CD4-positive, alpha-beta T cell (primary cell): ENCODE measurements at regions of chr7 and their contacts with region 1.

Region 1: GRCh38 chr7:25125137-25125946 is at the start of gene CYCS:
- DNase-seq: peak; percentile 99 to 100 (median 99)
- ATAC-seq: peak; percentile 90
- H3K4me3 ChIP-seq: peak within 1 kb of the TSS; percentile 92
- H3K4me3 Mint-ChIP-seq: peak within 1 kb of the TSS; percentile 99
- H3K27ac ChIP-seq: peak within 1 kb of the TSS; percentile 92 to 94
- H3K27ac Mint-ChIP-seq: peak within 1 kb of the TSS; percentile 99
- H3K4me1 ChIP-seq: peaks cover 14% of the 10 kb centered on the region
- H3K4me1 Mint-ChIP-seq: peaks cover 40% of the 10 kb centered on the region
- H3K27me3 ChIP-seq: no peaks in the 10 kb centered on the region
- H3K27me3 Mint-ChIP-seq: no peaks in the 10 kb centered on the region
- CTCF ChIP-seq: no peak
- total RNA-seq, gene CYCS: 126 to 131 TPM

Region 2: GRCh38 chr7:23531794-23532489 is 1593.4 kb before region 1 on chr7 and contains the start of gene TRA2A:
- CTCF ChIA-PET with region 1: no interaction called
- POLR2A ChIA-PET with region 1: interaction called, 4 read pairs
- intact Hi-C with region 1: loop called in 1 of 2 experiments (anchors 5 kb)
- DNase-seq: peak; percentile 92 to 99 (median 97)
- ATAC-seq: peak; percentile 91
- H3K4me3 ChIP-seq: peak within 1 kb of the TSS; percentile 97
- H3K4me3 Mint-ChIP-seq: peak within 1 kb of the TSS; percentile 94
- H3K27ac ChIP-seq: peak within 1 kb of the TSS; percentile 95 to 98
- H3K27ac Mint-ChIP-seq: peak within 1 kb of the TSS; percentile 97
- H3K4me1 ChIP-seq: peaks cover 29% of the 10 kb centered on the region
- H3K4me1 Mint-ChIP-seq: peaks cover 49% of the 10 kb centered on the region
- H3K27me3 ChIP-seq: no peaks in the 10 kb centered on the region
- H3K27me3 Mint-ChIP-seq: no peaks in the 10 kb centered on the region
- CTCF ChIP-seq: no peak
- total RNA-seq, gene TRA2A: 246 to 275 TPM

Region 3: DNA sequence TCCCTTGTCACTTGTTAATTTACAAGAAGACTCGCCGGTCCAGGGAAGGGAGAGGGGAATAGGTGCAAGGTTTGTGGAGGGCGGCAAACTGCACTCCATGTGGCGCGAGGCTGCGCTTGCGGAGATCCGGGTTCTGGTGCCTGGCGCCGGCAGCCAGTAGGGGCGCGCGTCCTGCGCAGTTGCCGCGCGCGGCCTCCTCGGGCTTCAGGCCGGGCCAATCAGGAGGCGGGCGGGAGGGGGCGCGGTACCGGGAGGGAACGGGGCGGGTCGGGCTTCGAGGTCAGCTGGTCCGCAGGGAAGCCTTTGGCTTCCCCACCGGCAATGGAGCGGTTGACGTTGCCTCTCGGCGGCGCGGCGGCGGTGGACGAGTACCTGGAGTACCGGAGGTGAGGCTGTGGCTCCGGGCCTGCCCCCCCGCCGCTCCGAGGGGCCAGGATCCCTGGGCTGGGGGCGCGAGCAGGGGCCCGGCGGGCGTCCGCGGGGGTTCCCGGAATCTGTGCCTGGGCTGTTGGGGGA is 1445.4 kb before region 1 on chr7 and contains the start of gene FAM221A:
- CTCF ChIA-PET with region 1: no interaction called
- POLR2A ChIA-PET with region 1: no interaction called
- intact Hi-C with region 1: loop called in 1 of 2 experiments (anchors 10 kb)
- DNase-seq: peak; percentile 60 to 91 (median 77)
- ATAC-seq: peak; percentile 95
- H3K4me3 ChIP-seq: peak within 1 kb of the TSS; percentile 81
- H3K4me3 Mint-ChIP-seq: peak within 1 kb of the TSS; percentile 95
- H3K27ac ChIP-seq: peak within 1 kb of the TSS; percentile 1 to 56
- H3K27ac Mint-ChIP-seq: peak within 1 kb of the TSS; percentile 85
- H3K4me1 ChIP-seq: peaks cover 12% of the 10 kb centered on the region
- H3K4me1 Mint-ChIP-seq: peaks cover 14% of the 10 kb centered on the region
- H3K27me3 ChIP-seq: no peaks in the 10 kb centered on the region
- H3K27me3 Mint-ChIP-seq: peaks cover 7% of the 10 kb centered on the region
- CTCF ChIP-seq: peak; percentile 82
- total RNA-seq, gene FAM221A: 1.8 to 2.8 TPM

Region 4: GRCh38 chr7:25093268-25093826 is 32.0 kb before region 1 on chr7:
- CTCF ChIA-PET with region 1: interaction called, 18 read pairs
- POLR2A ChIA-PET with region 1: interaction called, 12 read pairs
- intact Hi-C with region 1: no loop called
- DNase-seq: peak; percentile 59 to 82 (median 70)
- ATAC-seq: peak; percentile 80
- H3K4me3 ChIP-seq: no peak overlapping the region
- H3K4me3 Mint-ChIP-seq: no peak overlapping the region
- H3K27ac ChIP-seq: no peak overlapping the region
- H3K27ac Mint-ChIP-seq: no peak overlapping the region
- H3K4me1 ChIP-seq: peaks cover 9% of the 10 kb centered on the region
- H3K4me1 Mint-ChIP-seq: peaks cover 12% of the 10 kb centered on the region
- H3K27me3 ChIP-seq: no peaks in the 10 kb centered on the region
- H3K27me3 Mint-ChIP-seq: peaks cover 4% of the 10 kb centered on the region
- CTCF ChIP-seq: peak; percentile 93

Region 5: DNA sequence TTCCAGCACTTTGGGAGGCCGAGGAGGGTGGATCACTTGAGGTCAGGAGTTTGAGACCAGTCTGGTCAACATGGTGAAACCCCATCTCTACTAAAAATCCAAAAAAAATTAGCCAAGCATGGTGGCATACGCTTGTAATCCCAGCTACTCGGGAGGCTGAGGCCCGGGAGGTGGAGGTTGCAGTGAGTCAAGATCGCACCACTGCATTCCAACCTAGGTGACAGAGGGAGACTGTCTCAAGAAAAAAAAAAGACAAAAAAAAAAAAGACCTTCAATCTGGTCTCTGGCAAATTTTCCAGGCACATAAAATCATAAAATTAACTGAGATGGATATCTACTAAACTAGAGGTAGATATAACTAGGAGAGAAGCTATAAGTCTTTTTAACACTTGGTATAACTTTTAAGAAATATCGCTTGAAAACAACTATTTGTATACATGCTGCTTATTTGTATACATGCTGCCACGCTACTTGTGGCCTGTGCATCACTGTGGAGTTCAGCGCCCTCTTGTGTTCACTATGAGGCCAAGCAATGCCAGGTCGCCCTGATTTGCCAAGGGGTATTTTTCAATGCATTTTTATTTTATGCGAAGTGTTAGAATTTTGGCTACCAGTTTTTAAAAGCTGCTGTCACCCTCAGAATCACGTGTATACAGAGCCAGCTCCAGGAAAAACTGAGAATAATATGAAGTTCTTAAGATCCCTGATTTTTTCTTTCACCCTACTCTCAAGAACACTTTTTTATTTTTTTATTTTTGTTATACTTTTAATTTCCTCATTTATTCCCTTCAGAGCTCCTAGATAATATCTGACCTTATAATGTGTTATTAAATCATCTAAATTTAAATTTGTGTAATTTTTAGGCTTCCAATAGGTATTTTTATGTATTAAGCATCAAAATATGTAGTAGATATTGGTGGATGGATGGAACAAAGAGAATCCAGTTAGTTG is 27.0 kb before region 1 on chr7:
- CTCF ChIA-PET with region 1: interaction called, 18 read pairs
- POLR2A ChIA-PET with region 1: interaction called, 12 read pairs
- intact Hi-C with region 1: no loop called
- DNase-seq: peak; percentile 26 to 84 (median 42)
- ATAC-seq: peak; percentile 87
- H3K4me3 ChIP-seq: no peak overlapping the region
- H3K4me3 Mint-ChIP-seq: no peak overlapping the region
- H3K27ac ChIP-seq: no peak overlapping the region
- H3K27ac Mint-ChIP-seq: no peak overlapping the region
- H3K4me1 ChIP-seq: peaks cover 8% of the 10 kb centered on the region
- H3K4me1 Mint-ChIP-seq: peaks cover 9% of the 10 kb centered on the region
- H3K27me3 ChIP-seq: no peaks in the 10 kb centered on the region
- H3K27me3 Mint-ChIP-seq: peaks cover 1% of the 10 kb centered on the region
- CTCF ChIP-seq: peak; percentile 85

Region 6: GRCh38 chr7:25168145-25168544 is 42.8 kb after region 1 on chr7:
- CTCF ChIA-PET with region 1: no interaction called
- POLR2A ChIA-PET with region 1: no interaction called
- intact Hi-C with region 1: no loop called
- DNase-seq: no peak
- ATAC-seq: no peak
- H3K4me3 ChIP-seq: no peak overlapping the region
- H3K4me3 Mint-ChIP-seq: no peak overlapping the region
- H3K27ac ChIP-seq: no peak overlapping the region
- H3K27ac Mint-ChIP-seq: no peak overlapping the region
- H3K4me1 ChIP-seq: no peaks in the 10 kb centered on the region
- H3K4me1 Mint-ChIP-seq: no peaks in the 10 kb centered on the region
- H3K27me3 ChIP-seq: no peaks in the 10 kb centered on the region
- H3K27me3 Mint-ChIP-seq: no peaks in the 10 kb centered on the region
- CTCF ChIP-seq: no peak

Region 7: DNA sequence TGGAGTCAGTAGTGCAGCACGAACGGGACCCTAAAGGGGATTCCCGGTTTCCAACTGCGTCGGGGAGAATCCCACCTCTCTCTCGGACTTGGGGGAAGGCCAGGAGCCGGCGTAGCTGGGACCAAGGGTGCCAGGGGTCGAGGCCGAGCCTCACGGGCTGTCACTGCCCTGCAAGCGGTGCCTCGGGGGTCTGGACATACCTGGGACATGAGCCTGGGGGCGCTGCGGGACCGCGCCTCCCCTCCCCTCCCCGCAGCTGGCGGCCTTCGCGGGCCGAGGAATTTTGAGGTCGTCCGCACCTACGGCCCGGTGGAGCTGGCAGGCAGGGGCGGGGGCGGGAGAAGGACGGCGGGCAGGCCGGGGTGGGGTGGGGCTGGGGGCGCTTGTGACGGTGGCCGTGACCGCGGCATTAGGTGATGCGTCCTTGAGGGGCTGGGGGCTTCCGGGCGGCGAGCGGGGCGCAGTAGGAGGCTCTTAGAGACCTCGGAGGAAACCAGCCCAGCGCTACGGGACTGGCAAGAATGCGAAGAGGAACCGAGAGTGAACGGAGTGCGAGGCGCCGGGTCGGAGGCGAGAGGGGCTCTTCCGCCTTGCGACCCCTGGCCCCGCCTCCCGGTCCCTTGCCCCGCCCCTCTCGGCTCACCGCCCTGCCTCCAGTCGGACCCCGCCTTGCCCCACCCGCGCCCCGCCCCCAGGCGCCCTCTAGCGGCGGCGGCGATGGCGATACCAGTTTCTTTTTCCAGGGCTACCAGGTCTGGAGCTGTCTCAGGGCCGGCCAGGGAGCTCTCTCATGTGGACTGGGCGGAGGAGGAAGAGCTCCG is 54.6 kb after region 1 on chr7:
- CTCF ChIA-PET with region 1: no interaction called
- POLR2A ChIA-PET with region 1: interaction called, 27 read pairs
- intact Hi-C with region 1: loop called (anchors 1 to 2 kb)
- DNase-seq: peak; percentile 89 to 98 (median 95)
- ATAC-seq: peak; percentile 96
- H3K4me3 ChIP-seq: peak overlapping the region; percentile 77
- H3K4me3 Mint-ChIP-seq: peak overlapping the region; percentile 92
- H3K27ac ChIP-seq: peak overlapping the region; percentile 56 to 68
- H3K27ac Mint-ChIP-seq: peak overlapping the region; percentile 80
- H3K4me1 ChIP-seq: peaks cover 18% of the 10 kb centered on the region
- H3K4me1 Mint-ChIP-seq: peaks cover 24% of the 10 kb centered on the region
- H3K27me3 ChIP-seq: no peaks in the 10 kb centered on the region
- H3K27me3 Mint-ChIP-seq: no peaks in the 10 kb centered on the region
- CTCF ChIP-seq: peak; percentile 90

Region 8: GRCh38 chr7:25862260-25863037 is 737.1 kb after region 1 on chr7:
- CTCF ChIA-PET with region 1: no interaction called
- POLR2A ChIA-PET with region 1: no interaction called
- intact Hi-C with region 1: loop called in 1 of 2 experiments (anchors 10 kb)
- DNase-seq: peak; percentile 26 to 87 (median 51)
- ATAC-seq: peak; percentile 86
- H3K4me3 ChIP-seq: peak overlapping the region; percentile 13
- H3K4me3 Mint-ChIP-seq: peak overlapping the region; percentile 55
- H3K27ac ChIP-seq: no peak overlapping the region
- H3K27ac Mint-ChIP-seq: peak overlapping the region; percentile 78
- H3K4me1 ChIP-seq: peaks cover 20% of the 10 kb centered on the region
- H3K4me1 Mint-ChIP-seq: peaks cover 24% of the 10 kb centered on the region
- H3K27me3 ChIP-seq: peaks cover 66 to 98% of the 10 kb centered on the region in 2 experiments
- H3K27me3 Mint-ChIP-seq: peaks cover 30% of the 10 kb centered on the region
- CTCF ChIP-seq: no peak